ENCODE measurements at regions of chr2 and their contacts with region 1.

Region 1: DNA sequence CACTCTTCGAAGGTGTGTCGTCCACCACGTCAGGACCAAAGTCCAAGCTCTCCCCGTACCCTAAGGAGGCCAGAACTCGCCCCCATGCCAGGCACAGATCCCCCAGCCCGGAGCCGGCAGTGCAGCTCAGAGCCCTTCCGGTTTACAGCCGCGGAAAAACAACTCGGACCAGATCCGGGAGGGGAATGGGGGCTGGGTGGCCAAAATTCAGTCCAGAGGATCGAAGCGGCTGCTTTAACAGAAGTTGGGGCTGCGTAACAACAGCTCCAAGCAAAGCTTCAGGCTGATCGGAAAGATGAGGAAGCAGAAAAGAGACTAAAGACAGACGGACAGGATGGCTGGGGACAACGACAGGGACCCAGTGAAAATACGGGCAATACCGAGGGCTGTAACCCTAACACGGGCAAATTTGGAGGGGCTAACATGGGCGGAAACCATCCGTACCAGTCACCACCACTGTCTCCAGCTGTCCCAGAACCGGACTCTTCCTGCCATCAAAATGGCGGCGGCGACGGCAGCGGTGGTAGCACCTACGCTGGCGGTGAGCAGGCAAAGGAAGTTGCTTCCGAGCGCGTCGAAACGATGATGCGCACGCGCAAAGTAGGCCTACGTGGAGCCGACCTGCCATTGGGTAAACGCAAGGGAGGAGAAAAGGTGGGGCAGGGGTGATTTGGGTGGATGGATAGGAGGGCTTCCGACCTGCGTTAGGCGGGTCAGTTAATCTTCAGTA is at the start of gene MMADHC:
- DNase-seq: peak; percentile 82
- ATAC-seq: peak; percentile 97
- H3K4me3 Mint-ChIP-seq: peak within 1 kb of the TSS; percentile 99
- H3K27ac Mint-ChIP-seq: peak within 1 kb of the TSS; percentile 97
- H3K4me1 Mint-ChIP-seq: peaks cover 51% of the 10 kb centered on the region
- H3K27me3 Mint-ChIP-seq: peaks cover 6% of the 10 kb centered on the region
- CTCF ChIP-seq: no peak
- total RNA-seq, gene MMADHC: 69.6 and 72.0 TPM in 2 replicates

Region 2: DNA sequence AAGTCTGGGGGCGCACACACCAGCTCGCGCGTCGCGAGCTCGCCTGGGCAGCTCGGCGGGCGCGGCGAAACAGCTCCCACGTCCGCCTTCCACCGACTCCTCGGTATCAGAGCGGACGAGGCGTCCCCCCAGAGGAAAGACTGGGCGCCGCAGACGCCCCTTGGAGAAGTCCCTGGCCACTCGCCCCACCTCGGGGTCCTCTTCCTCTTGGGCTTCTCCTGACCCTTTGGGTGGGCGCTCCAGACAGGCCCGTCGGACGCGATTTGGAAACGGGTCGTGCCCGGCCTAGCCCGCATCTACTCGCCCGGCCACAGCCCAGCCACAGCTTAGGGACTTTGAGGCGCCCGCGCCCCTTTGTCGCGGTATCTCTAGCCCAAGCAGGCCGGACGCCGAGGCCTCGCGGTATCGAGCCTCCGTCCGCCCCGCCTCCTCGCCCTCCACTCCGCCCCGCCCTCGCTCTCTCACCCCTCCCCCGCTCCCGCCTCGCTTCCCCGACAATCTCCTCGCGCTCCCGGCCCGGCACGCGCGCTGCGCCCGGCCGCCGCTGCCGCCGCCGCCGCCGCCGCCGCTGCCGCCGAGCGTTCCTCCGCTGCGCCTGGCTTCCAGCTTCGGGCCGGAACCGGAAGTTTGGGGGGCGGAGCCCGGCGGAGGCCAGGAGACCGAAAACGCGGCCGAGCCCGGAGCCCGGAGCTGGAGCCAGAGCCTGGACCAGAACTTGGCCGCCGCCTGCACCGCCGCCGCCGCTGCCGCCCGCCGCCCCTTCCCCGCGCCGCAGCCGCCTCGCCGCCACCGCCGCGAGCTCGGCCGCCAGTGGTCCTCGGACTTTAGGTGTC is 1743.3 kb before region 1 on chr2:
- CTCF ChIA-PET with region 1: no interaction called
- POLR2A ChIA-PET with region 1: interaction called, 3 read pairs
- intact Hi-C with region 1: loop called (anchors 5 kb)
- DNase-seq: peak; percentile 88
- ATAC-seq: peak; percentile 83
- H3K4me3 Mint-ChIP-seq: peak overlapping the region; percentile 88
- H3K27ac Mint-ChIP-seq: peak overlapping the region; percentile 80
- H3K4me1 Mint-ChIP-seq: peaks cover 29% of the 10 kb centered on the region
- H3K27me3 Mint-ChIP-seq: peaks cover 31% of the 10 kb centered on the region
- CTCF ChIP-seq: no peak

Region 3: DNA sequence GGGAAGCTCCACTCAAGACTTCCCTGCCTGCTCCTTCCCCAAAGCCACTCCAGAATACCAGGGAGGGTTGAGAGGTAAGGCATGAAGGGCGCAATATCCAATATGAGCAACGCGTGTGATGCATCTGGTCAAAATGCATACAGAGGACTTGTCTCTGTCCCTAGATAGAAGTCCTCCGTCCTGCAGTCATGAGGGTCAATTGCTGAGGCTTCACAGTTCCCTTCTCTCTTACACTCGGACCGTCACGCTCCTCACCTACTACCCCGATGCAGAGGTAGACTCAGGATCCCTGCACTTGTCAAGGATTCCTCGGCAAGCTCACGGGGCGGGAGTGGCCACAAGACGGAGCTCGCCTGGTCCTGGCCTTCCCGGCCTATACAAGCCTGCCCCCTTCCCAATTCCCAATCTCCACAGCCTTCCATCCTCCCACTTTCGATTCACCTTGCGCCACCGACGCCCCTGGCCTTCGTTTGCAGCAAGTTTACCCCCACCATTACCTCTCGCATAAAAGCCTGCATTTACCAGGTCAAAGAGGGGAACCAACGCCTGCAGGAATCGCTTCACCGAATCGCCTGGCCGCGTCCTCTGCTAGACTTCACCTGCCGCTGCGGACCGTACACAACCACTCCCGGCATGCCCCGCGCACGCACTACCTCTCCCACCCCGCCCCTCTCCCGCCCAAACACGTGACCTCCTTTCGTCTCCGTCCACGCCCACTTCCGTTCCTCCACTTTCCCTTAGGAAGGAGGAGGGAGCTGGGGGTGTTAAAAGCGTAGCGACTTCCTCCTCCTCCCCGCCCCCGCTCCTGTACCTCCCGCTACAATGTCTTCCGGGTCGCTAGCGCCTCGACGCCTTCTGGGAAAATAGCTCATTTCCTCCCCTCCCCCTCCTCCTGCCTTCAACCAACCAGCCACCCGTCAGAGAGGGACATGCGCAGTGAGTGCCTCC is 1567.0 kb before region 1 on chr2 and contains the start of gene ORC4:
- CTCF ChIA-PET with region 1: no interaction called
- POLR2A ChIA-PET with region 1: interaction called, 3 read pairs
- intact Hi-C with region 1: loop called (anchors 1 kb)
- DNase-seq: peak; percentile 78
- ATAC-seq: peak; percentile 89
- H3K4me3 Mint-ChIP-seq: peak within 1 kb of the TSS; percentile 100
- H3K27ac Mint-ChIP-seq: peak within 1 kb of the TSS; percentile 95
- H3K4me1 Mint-ChIP-seq: peaks cover 71% of the 10 kb centered on the region
- H3K27me3 Mint-ChIP-seq: no peaks in the 10 kb centered on the region
- CTCF ChIP-seq: no peak
- total RNA-seq, gene ORC4: 28.2 and 30.7 TPM in 2 replicates

Region 4: GRCh38 chr2:148874868-148875341 is 712.5 kb before region 1 on chr2 and contains the start of gene KIF5C:
- CTCF ChIA-PET with region 1: no interaction called
- POLR2A ChIA-PET with region 1: no interaction called
- intact Hi-C with region 1: loop called (anchors 1 kb)
- DNase-seq: peak; percentile 68
- ATAC-seq: peak; percentile 93
- H3K4me3 Mint-ChIP-seq: peak within 1 kb of the TSS; percentile 82
- H3K27ac Mint-ChIP-seq: no peak within 1 kb of the TSS
- H3K4me1 Mint-ChIP-seq: peaks cover 14% of the 10 kb centered on the region
- H3K27me3 Mint-ChIP-seq: peaks cover 39% of the 10 kb centered on the region
- CTCF ChIP-seq: no peak
- total RNA-seq, gene KIF5C: 1.4 and 2.6 TPM in 2 replicates

Region 5: DNA sequence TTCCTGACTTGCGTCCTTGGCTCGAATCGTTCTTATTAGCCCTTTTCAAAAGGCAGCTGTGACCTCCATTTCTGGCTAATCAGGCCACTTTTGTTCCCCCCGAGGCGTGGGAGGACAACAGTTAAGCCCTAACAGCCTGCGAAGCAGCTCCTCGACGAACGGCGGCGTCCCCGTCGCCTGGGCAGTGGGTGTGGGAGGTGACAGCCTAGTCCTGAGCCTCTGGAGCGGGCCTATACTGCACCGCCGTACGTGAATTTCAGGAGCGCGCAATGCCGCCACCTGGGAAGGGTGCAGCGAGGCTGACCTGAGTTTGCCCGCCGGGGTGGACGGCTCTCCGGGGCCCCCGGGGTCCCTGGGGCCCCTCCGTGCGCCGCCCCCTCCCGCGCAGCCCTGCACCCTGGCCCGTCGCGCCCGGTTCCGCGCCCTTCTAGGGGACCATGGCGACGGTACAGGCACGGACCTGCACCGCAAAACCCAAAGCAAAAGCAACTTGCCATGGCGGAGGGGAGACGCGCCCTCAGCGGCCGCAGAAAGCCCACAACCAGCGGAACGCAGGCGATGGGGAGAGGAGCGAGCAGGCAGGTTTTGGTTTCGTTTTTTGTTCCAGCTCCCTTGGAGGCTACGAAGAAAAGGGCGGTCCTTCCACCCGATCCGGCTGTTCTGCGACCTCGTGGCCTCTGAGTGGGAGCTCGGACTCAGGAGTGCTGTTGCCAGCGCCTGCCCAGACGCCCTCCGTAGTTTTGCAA is 1674.0 kb after region 1 on chr2 and contains the start of gene RBM43:
- CTCF ChIA-PET with region 1: no interaction called
- POLR2A ChIA-PET with region 1: interaction called, 14 read pairs
- intact Hi-C with region 1: loop called (anchors 1 kb)
- DNase-seq: peak; percentile 58
- ATAC-seq: peak; percentile 90
- H3K4me3 Mint-ChIP-seq: peak within 1 kb of the TSS; percentile 93
- H3K27ac Mint-ChIP-seq: peak within 1 kb of the TSS; percentile 94
- H3K4me1 Mint-ChIP-seq: peaks cover 20% of the 10 kb centered on the region
- H3K27me3 Mint-ChIP-seq: no peaks in the 10 kb centered on the region
- CTCF ChIP-seq: no peak
- total RNA-seq, gene RBM43: 4.8 and 5.0 TPM in 2 replicates

Region 6: GRCh38 chr2:151289369-151290088 is 1702.1 kb after region 1 on chr2 and contains the start of gene NMI:
- CTCF ChIA-PET with region 1: no interaction called
- POLR2A ChIA-PET with region 1: interaction called, 13 read pairs
- intact Hi-C with region 1: loop called (anchors 1 kb)
- DNase-seq: peak; percentile 75
- ATAC-seq: peak; percentile 76
- H3K4me3 Mint-ChIP-seq: peak within 1 kb of the TSS; percentile 85
- H3K27ac Mint-ChIP-seq: peak within 1 kb of the TSS; percentile 94
- H3K4me1 Mint-ChIP-seq: peaks cover 44% of the 10 kb centered on the region
- H3K27me3 Mint-ChIP-seq: no peaks in the 10 kb centered on the region
- CTCF ChIP-seq: no peak
- total RNA-seq, gene NMI: 34.6 and 36.7 TPM in 2 replicates

Region 7: DNA sequence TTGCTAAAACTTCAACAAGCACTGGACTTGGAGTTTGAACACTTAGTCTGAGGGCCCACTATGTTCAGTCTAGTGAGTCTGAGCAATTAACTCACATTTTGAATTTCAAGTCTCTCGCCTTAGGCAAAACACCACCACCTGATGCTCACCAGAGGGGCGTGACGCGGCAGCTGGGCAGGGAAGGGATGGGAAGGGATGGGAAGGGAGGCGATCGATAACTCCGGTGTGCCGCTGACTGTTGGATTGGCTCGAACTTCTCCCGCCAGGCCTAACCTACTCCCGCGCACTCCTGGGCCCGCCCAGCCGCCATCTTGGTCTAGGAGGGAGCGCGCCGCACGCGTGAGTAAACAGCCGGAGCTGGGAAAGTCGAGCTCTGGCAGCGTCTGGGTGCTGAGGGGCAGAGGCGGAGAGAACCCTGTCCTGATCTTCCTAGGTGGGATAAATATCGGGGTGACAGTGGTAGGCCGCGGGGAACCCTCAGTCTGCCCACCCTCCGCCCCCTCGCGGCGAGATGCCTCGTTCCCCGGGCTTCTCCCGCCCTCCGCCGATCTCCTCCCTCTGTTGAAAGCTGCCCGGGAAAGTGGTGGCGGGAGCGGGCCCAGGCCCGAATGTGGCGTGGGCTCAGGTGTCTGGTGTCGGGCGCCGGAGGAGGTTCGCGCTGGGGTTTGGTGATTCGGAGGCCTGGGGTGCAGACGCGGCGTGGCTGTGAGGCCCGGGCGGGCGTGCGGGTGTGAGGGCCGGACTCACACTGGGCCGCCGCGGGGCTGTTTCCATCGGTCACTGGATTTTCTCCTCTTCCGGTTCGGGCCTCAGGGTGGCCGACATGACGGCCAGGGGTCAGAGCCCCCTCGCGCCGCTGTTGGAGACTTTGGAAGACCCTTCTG is 1822.5 kb after region 1 on chr2 and contains the start of gene RIF1:
- CTCF ChIA-PET with region 1: no interaction called
- POLR2A ChIA-PET with region 1: no interaction called
- intact Hi-C with region 1: loop called (anchors 1 kb)
- DNase-seq: peak; percentile 73
- ATAC-seq: peak; percentile 90
- H3K4me3 Mint-ChIP-seq: peak within 1 kb of the TSS; percentile 89
- H3K27ac Mint-ChIP-seq: peak within 1 kb of the TSS; percentile 80
- H3K4me1 Mint-ChIP-seq: peaks cover 26% of the 10 kb centered on the region
- H3K27me3 Mint-ChIP-seq: no peaks in the 10 kb centered on the region
- CTCF ChIP-seq: no peak
- total RNA-seq, gene RIF1: 43.7 and 51.1 TPM in 2 replicates

Measured in activated B cell treated with CpG ODN at 0.5 μM for 24 hours (primary cell).